ENCODE measurements at regions of chr6 and their contacts with region 1.

Region 1: GRCh38 chr6:11434565-11435326 is 102.8 kb upstream of the TMEM170B start:
- DNase-seq: no peak
- ATAC-seq: peak in 1 of 2 donors; percentile 48
- H3K4me3 ChIP-seq: no peak overlapping the region
- H3K27ac ChIP-seq: no peak overlapping the region
- H3K4me1 ChIP-seq: peaks cover 4% of the 10 kb centered on the region
- H3K27me3 ChIP-seq: no peaks in the 10 kb centered on the region

Region 2: GRCh38 chr6:11366183-11366933 is 68.4 kb before region 1 on chr6:
- intact Hi-C with region 1: loop called in 1 of 4 experiments (anchors 10 kb)
- DNase-seq: no peak
- ATAC-seq: no peak
- H3K4me3 ChIP-seq: no peak overlapping the region
- H3K27ac ChIP-seq: peak overlapping the region; percentile 94
- H3K4me1 ChIP-seq: peaks cover 17% of the 10 kb centered on the region
- H3K27me3 ChIP-seq: no peaks in the 10 kb centered on the region

Region 3: DNA sequence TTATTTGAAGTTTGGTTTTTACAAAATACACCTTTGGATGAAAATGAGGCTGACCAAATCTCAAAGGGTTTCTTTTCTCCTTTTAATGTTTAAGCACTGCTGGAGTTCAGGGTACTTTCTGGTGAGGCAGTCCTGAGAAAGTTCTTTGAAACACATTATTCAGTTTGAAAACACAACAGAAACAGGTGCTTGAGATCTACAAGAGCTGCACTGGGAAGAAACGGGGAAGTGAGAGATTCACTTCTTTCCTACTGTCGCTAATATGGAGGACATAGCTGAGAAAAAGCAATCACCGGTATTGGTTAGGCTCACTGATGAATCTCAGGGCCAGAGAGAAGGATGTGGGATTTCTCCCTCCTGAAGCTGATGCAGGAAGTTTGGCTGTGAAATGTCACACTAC is 79.9 kb after region 1 on chr6:
- intact Hi-C with region 1: no loop called
- DNase-seq: no peak
- ATAC-seq: no peak
- H3K4me3 ChIP-seq: no peak overlapping the region
- H3K27ac ChIP-seq: no peak overlapping the region
- H3K4me1 ChIP-seq: no peaks in the 10 kb centered on the region
- H3K27me3 ChIP-seq: no peaks in the 10 kb centered on the region